Left ventricle myocardium superior (tissue), 1 donor: ENCODE measurements at regions of chr13 and their contacts with region 1.

Region 1: DNA sequence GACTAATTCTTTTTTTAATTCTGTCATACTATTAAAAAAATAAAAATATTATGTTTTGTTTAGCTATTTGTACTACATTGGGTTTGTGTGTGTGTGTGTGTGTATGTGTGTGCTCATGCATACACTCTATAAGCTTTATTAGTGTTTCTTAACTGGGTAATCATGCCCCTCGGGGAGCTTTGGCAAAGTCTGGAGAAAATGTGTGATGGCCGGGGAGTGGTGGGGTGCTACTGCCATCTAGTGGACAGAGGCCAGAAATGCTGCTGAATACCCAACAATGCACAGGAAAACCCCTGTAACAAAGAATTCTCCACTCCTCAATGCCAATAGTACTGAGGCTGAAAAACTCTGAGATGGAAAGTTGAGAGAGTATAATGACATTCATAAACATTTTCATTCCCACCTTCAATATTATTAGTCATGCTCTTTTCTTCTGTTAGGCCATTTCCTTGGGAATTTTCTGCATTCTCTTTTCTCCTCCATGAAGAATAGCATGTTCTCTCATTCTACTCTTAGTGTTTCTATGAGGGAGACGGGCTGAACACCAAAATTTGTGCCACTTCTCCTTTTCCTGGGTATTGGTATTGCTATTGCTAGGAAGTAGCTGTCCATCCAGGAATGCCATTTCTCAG is 157.3 kb downstream of the DNAJC3 start:
- DNase-seq: peak; percentile 58
- ATAC-seq: peak; percentile 79

Region 2: DNA sequence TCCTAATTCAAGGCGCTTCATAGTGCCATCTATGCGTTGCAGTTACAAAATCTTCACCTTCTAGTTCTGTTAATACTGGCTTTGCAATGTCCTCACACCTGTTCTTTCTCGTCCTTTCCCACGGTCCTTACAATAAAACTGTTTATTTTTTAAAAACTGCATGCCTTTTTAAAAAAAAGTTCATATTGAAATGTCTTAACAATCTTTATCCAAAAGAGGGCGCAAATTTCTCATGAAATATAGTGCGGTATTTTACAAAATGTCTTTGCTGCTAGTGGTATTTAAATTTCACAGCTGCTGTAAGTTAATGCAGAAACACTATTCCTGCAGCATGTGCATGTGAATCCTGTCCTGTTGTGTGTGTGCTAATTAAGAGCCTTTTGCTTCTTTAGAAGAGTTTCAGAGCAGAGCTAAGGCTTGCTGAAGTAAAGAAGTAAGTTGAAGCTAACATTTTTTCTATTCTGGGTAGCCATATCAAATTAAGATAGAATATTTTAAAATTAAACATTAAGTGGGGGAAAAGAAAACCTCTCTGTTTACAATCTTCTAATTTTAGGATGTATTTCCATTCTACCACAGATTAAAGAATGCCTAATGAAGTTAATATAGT is 297.5 kb before region 1 on chr13:
- intact Hi-C with region 1: loop called (anchors 10 kb)
- DNase-seq: no peak
- ATAC-seq: no peak

Region 3: DNA sequence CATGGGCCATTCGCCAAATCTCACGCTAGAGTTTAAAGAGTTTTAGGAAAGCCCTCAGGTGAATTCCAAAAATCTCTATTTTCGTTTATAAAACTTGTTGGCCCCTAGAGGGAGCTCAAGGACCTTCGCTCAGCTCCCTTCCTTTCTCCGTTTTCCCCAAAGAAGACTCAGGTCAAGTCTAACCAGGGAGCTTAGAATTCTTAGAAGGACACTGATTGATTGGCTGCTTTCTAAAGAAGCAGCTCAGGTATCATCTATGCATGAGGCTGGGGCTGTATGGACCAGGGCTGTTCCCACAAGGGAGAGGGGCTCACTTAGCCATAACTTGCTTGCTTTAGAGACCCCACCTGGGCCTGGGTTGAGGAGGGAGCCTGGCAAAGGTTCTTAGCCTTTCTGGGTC is 210.2 kb before region 1 on chr13:
- intact Hi-C with region 1: loop called (anchors 2 kb)
- DNase-seq: no peak
- ATAC-seq: no peak